GM12878 (cell line): ENCODE measurements at regions of chr2 and their contacts with region 1.

Region 1: GRCh38 chr2:195318440-195319111 is 338.4 kb upstream of the SLC39A10 start:
- DNase-seq: no peak
- ATAC-seq: peak; percentile 46
- H3K4me3 ChIP-seq: no peak overlapping the region
- H3K27ac ChIP-seq: no peak overlapping the region
- H3K4me1 ChIP-seq: no peaks in the 10 kb centered on the region
- H3K27me3 ChIP-seq: no peaks in the 10 kb centered on the region
- CTCF ChIP-seq: peak; percentile 27 to 76 (median 50); a peak in 5 of 6 replicates
- EP300 ChIP-seq: no peak
- POLR2A ChIP-seq: no peak
- RAD21 ChIP-seq: peak; percentile 85

Region 2: GRCh38 chr2:193695367-193695766 is 1623.2 kb before region 1 on chr2:
- CTCF ChIA-PET with region 1: no interaction called
- POLR2A ChIA-PET with region 1: no interaction called
- RAD21 ChIA-PET with region 1: interaction called, 3 read pairs
- SMC1A ChIA-PET with region 1: no interaction called
- in situ Hi-C with region 1: loop called (anchors 25 kb)
- intact Hi-C with region 1: loop called (anchors 5 kb)
- DNase-seq: no peak
- ATAC-seq: peak; percentile 90
- H3K4me3 ChIP-seq: no peak overlapping the region
- H3K27ac ChIP-seq: no peak overlapping the region
- H3K4me1 ChIP-seq: no peaks in the 10 kb centered on the region
- H3K27me3 ChIP-seq: no peaks in the 10 kb centered on the region
- CTCF ChIP-seq: peak; percentile 28 to 36 (median 31); a peak in 4 of 6 replicates
- EP300 ChIP-seq: no peak
- POLR2A ChIP-seq: no peak
- RAD21 ChIP-seq: peak; percentile 31; the same call in 1 of the 2 replicates

Region 3: GRCh38 chr2:194545978-194546377 is 772.6 kb before region 1 on chr2:
- CTCF ChIA-PET with region 1: interaction called, 3 read pairs
- POLR2A ChIA-PET with region 1: interaction called, 5 read pairs
- RAD21 ChIA-PET with region 1: interaction called, 6 read pairs
- SMC1A ChIA-PET with region 1: interaction called, 8 read pairs
- in situ Hi-C with region 1: no loop called
- intact Hi-C with region 1: loop called (anchors 1 kb)
- DNase-seq: no peak
- ATAC-seq: peak; percentile 64
- H3K4me3 ChIP-seq: no peak overlapping the region
- H3K27ac ChIP-seq: no peak overlapping the region
- H3K4me1 ChIP-seq: no peaks in the 10 kb centered on the region
- H3K27me3 ChIP-seq: no peaks in the 10 kb centered on the region
- CTCF ChIP-seq: peak in 2 of 3 experiments; percentile 16 to 44; a peak in 1 of 6 replicates
- EP300 ChIP-seq: no peak
- POLR2A ChIP-seq: no peak
- RAD21 ChIP-seq: peak; percentile 48; the same call in 1 of the 2 replicates

Region 4: GRCh38 chr2:195124391-195125079 is 194.0 kb before region 1 on chr2:
- CTCF ChIA-PET with region 1: no interaction called
- POLR2A ChIA-PET with region 1: no interaction called
- RAD21 ChIA-PET with region 1: no interaction called
- SMC1A ChIA-PET with region 1: no interaction called
- in situ Hi-C with region 1: no loop called
- intact Hi-C with region 1: no loop called
- DNase-seq: no peak
- ATAC-seq: no peak
- H3K4me3 ChIP-seq: no peak overlapping the region
- H3K27ac ChIP-seq: no peak overlapping the region
- H3K4me1 ChIP-seq: no peaks in the 10 kb centered on the region
- H3K27me3 ChIP-seq: no peaks in the 10 kb centered on the region
- CTCF ChIP-seq: no peak
- EP300 ChIP-seq: no peak
- POLR2A ChIP-seq: no peak
- RAD21 ChIP-seq: no peak

Region 5: DNA sequence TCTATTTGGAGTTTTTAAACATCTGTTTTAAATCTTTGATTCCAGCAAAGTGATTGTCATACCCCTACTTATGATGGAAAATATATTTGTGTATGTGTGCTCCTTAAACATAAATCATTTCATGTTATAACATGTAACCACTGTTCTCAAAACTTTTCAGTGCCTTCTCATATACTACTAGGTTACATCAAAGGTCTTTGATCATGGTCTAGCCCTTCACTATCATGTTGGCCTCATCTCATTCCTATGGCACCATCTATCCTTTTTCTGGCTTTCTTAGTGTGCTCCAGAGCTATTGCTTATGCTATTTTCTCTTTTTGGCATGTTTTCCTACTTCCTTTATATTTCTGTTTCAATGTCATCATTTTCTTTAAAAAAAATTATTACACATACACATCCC is 29.5 kb before region 1 on chr2:
- CTCF ChIA-PET with region 1: no interaction called
- POLR2A ChIA-PET with region 1: no interaction called
- RAD21 ChIA-PET with region 1: no interaction called
- SMC1A ChIA-PET with region 1: no interaction called
- in situ Hi-C with region 1: no loop called
- intact Hi-C with region 1: no loop called
- DNase-seq: no peak
- ATAC-seq: no peak
- H3K4me3 ChIP-seq: no peak overlapping the region
- H3K27ac ChIP-seq: no peak overlapping the region
- H3K4me1 ChIP-seq: no peaks in the 10 kb centered on the region
- H3K27me3 ChIP-seq: no peaks in the 10 kb centered on the region
- CTCF ChIP-seq: no peak
- EP300 ChIP-seq: no peak
- POLR2A ChIP-seq: no peak
- RAD21 ChIP-seq: no peak

Region 6: GRCh38 chr2:195304310-195304709 is 14.3 kb before region 1 on chr2:
- CTCF ChIA-PET with region 1: interaction called, 7 read pairs
- POLR2A ChIA-PET with region 1: no interaction called
- RAD21 ChIA-PET with region 1: interaction called, 9 read pairs
- SMC1A ChIA-PET with region 1: interaction called, 13 read pairs
- in situ Hi-C with region 1: no loop called
- intact Hi-C with region 1: no loop called
- DNase-seq: no peak
- ATAC-seq: peak; percentile 34; the same call in 2 of the 3 replicates
- H3K4me3 ChIP-seq: no peak overlapping the region
- H3K27ac ChIP-seq: no peak overlapping the region
- H3K4me1 ChIP-seq: no peaks in the 10 kb centered on the region
- H3K27me3 ChIP-seq: 0 out of 4 replicates have a peak, but pooled peaks cover 0 to 3% of the 10 kb centered on the region in 2 experiments
- CTCF ChIP-seq: peak; percentile 7 to 21 (median 21); a peak in 4 of 6 replicates
- EP300 ChIP-seq: no peak
- POLR2A ChIP-seq: no peak
- RAD21 ChIP-seq: 0 out of 2 replicates have a peak, but pooled peaks have one; percentile 15

Region 7: GRCh38 chr2:195360242-195360641 is 41.7 kb after region 1 on chr2:
- CTCF ChIA-PET with region 1: interaction called, 4 read pairs
- POLR2A ChIA-PET with region 1: no interaction called
- RAD21 ChIA-PET with region 1: interaction called, 4 read pairs
- SMC1A ChIA-PET with region 1: interaction called, 10 read pairs
- in situ Hi-C with region 1: no loop called
- intact Hi-C with region 1: no loop called
- DNase-seq: no peak
- ATAC-seq: no peak
- H3K4me3 ChIP-seq: no peak overlapping the region
- H3K27ac ChIP-seq: no peak overlapping the region
- H3K4me1 ChIP-seq: no peaks in the 10 kb centered on the region
- H3K27me3 ChIP-seq: no peaks in the 10 kb centered on the region
- CTCF ChIP-seq: no peak
- EP300 ChIP-seq: no peak
- POLR2A ChIP-seq: no peak
- RAD21 ChIP-seq: no peak

Region 8: DNA sequence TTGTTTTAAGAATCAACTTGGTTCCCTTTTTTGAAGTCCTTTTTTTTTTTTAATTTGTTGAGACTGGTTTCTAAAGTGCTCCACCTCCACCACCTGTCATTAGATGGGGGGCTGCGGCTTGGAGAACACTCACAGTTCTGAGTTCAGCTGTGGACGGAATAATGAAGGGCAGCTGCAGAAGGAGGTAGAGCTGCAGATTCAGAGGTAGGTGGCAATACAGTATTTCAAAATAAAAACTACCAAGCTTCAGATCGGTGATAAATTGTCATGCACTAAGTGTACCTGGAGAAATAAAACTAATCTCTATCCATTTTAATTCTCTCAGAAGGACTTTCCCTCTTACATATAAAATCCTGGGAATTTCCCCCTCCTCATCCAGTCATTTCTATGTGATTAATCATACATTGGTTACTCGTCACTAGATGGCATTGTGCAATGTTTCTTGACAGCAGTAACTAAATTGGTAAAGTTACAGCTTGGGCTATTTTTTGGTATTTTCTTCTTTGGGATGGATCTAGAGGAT is 257.4 kb after region 1 on chr2:
- CTCF ChIA-PET with region 1: interaction called, 14 read pairs
- POLR2A ChIA-PET with region 1: no interaction called
- RAD21 ChIA-PET with region 1: interaction called, 5 read pairs
- SMC1A ChIA-PET with region 1: interaction called, 8 read pairs
- in situ Hi-C with region 1: no loop called
- intact Hi-C with region 1: no loop called
- DNase-seq: no peak
- ATAC-seq: peak; percentile 87
- H3K4me3 ChIP-seq: no peak overlapping the region
- H3K27ac ChIP-seq: no peak overlapping the region
- H3K4me1 ChIP-seq: no peaks in the 10 kb centered on the region; the same call in 1 of the 2 replicates
- H3K27me3 ChIP-seq: no peaks in the 10 kb centered on the region
- CTCF ChIP-seq: peak in 2 of 3 experiments; percentile 12 to 60; a peak in 3 of 6 replicates
- EP300 ChIP-seq: no peak
- POLR2A ChIP-seq: no peak
- RAD21 ChIP-seq: peak; percentile 54

Region 9: GRCh38 chr2:195937176-195937575 is 618.6 kb after region 1 on chr2:
- CTCF ChIA-PET with region 1: no interaction called
- POLR2A ChIA-PET with region 1: no interaction called
- RAD21 ChIA-PET with region 1: no interaction called
- SMC1A ChIA-PET with region 1: no interaction called
- in situ Hi-C with region 1: no loop called
- intact Hi-C with region 1: loop called (anchors 5 kb)
- DNase-seq: no peak
- ATAC-seq: no peak
- H3K4me3 ChIP-seq: no peak overlapping the region
- H3K27ac ChIP-seq: no peak overlapping the region
- H3K4me1 ChIP-seq: no peaks in the 10 kb centered on the region
- H3K27me3 ChIP-seq: no peaks in the 10 kb centered on the region
- CTCF ChIP-seq: no peak
- EP300 ChIP-seq: no peak
- POLR2A ChIP-seq: no peak
- RAD21 ChIP-seq: no peak